Activated CD4-positive, alpha-beta T cell treated with anti-CD3 and anti-CD28 coated beads for 36 hours (primary cell): ENCODE measurements at regions of chr6 and their contacts with region 1.

Region 1: DNA sequence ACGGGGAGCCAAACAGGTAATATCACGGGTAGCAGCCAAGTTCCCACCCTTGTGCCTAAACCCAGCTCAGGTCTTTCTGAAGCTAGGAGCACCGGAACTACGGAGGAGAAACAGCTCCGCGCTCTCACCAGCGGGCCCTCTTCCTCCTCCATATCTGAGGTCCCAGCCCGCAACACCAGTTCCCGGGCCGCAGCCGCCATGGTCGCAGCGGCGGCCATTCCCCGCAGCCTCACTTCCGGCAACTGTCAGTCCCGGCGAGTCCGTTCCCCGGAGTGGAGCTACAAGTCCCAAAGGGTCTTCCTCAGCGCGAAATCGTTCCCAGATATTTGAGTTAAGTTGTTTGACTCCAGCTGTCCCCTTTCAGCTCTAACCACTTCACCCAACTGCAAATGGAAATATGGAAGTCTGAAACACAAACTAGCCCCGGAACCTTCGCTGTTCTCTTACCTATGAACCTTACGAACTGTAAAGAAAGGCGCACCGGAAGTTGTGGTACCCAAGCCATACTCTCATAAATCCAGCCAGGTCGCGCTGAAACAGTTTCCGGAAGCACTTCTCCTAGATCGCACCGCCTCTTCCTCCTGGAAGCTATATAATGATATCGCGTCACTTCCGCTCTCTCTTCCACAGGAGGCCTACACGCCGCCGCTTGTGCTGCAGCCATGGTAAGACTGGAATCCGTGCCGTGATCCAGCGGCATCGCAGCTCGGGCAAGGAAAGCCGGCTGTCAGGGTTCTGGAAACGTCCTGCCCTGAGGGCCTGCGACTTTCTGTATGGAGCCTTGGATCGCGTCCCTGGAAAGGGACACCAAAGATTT is at the starts of genes RPS18 and VPS52:
- DNase-seq: peak; percentile 94
- ATAC-seq: peak; percentile 92
- H3K4me3 Mint-ChIP-seq: peak within 1 kb of the TSS; percentile 91
- H3K27ac Mint-ChIP-seq: peak within 1 kb of the TSS; percentile 100
- H3K4me1 Mint-ChIP-seq: peaks cover 47% of the 10 kb centered on the region
- H3K27me3 Mint-ChIP-seq: no peaks in the 10 kb centered on the region
- total RNA-seq, gene RPS18: 2,706 to 4,631 TPM
- total RNA-seq, gene VPS52: 35.6 to 45.2 TPM

Region 2: DNA sequence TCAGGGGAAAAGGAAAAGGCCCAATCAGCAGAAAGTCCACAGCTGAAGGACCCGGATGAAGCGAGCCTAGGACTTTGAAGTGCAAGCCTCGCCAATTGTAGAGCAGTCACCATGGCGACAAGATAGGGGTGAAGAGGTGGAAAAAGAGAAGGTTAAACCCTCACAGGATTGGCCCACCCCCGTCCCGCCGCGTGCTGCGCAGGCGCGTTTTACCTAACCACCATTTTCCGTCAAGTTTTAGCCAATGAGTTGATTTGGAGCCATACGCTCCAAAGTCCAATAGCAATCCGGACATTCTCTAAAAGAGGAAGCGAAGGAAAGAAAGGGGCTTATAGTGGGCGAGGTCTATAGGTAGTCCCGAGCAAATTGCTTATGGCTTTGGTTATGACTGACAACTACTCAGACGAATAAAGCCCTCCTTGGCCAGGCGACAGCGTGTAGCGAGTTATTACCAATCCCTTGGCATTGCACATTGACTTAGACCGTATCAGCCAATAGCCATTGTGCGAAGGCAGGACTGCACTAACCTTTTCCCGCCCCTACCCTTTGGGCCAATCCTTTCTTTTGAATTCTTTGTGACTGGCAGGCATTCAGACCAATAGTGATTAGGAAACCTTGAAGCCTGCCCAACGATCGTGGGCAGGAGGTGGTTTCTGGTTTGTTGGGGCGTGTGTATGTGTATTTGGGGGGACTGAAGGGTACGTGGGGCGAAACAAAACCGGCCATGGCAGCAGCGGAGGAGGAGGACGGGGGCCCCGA is 1093.7 kb before region 1 on chr6 and contains the start of gene RNF5:
- CTCF ChIA-PET with region 1: no interaction called
- POLR2A ChIA-PET with region 1: no interaction called
- intact Hi-C with region 1: loop called in 1 of 2 experiments (anchors 1 kb)
- DNase-seq: peak; percentile 96
- ATAC-seq: peak; percentile 89
- H3K4me3 Mint-ChIP-seq: peak within 1 kb of the TSS; percentile 92
- H3K27ac Mint-ChIP-seq: peak within 1 kb of the TSS; percentile 98
- H3K4me1 Mint-ChIP-seq: peaks cover 70% of the 10 kb centered on the region
- H3K27me3 Mint-ChIP-seq: no peaks in the 10 kb centered on the region
- total RNA-seq, gene RNF5: 51.7 to 65.6 TPM

Region 3: DNA sequence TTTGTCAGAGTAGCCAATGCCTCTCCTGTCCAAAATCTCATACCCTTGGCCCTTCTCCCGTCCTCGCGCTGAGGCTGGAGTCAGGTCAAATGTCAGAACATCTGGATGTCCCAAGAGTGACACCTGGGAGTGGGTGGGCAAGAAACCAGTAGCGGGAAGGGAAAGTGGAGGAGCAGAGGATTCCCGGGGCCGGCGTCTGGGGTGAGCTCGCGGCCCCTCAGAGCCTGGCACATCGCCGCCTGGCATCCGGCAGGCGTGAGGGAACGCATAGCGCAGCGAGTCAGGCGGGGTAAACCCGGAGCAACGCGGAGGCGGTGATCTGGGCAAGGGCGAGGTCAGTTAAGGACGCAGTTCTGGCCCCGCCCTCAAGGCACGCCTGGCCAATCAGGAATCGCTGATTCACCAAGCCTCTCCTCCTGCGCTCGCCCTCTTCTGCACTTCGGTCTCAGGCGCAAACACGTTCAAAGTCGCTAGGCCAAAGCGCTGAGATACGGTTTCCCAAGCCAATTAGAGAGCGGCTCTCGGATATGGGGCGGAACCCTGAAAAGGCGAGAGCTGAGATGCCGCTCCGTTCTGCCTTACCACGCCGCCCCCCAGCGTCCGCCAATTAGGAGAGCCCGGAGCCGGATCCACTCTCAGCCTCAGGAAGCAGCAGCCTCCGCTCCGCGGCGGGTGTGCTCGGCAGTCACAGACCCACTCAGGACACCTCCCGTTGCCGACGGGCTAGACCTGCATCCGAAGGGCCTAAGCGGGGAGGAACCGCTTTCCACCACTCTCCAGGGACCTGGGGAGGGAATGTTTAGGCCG is 22.5 kb before region 1 on chr6:
- CTCF ChIA-PET with region 1: interaction called, 14 read pairs
- POLR2A ChIA-PET with region 1: interaction called, 8 read pairs
- intact Hi-C with region 1: loop called (anchors 1 kb)
- DNase-seq: peak; percentile 99
- ATAC-seq: peak; percentile 93
- H3K4me3 Mint-ChIP-seq: peak overlapping the region; percentile 91
- H3K27ac Mint-ChIP-seq: peak overlapping the region; percentile 96
- H3K4me1 Mint-ChIP-seq: peaks cover 41% of the 10 kb centered on the region
- H3K27me3 Mint-ChIP-seq: peaks cover 3% of the 10 kb centered on the region

Region 4: GRCh38 chr6:33317669-33318425 is 46.2 kb after region 1 on chr6 and contains the start of gene ZBTB22:
- CTCF ChIA-PET with region 1: interaction called, 8 read pairs
- POLR2A ChIA-PET with region 1: interaction called, 10 read pairs
- intact Hi-C with region 1: loop called (anchors 1 kb)
- DNase-seq: peak; percentile 98
- ATAC-seq: peak; percentile 69
- H3K4me3 Mint-ChIP-seq: peak within 1 kb of the TSS; percentile 80
- H3K27ac Mint-ChIP-seq: peak within 1 kb of the TSS; percentile 93
- H3K4me1 Mint-ChIP-seq: peaks cover 70% of the 10 kb centered on the region
- H3K27me3 Mint-ChIP-seq: no peaks in the 10 kb centered on the region
- total RNA-seq, gene ZBTB22: 9.0 to 9.9 TPM

Region 5: DNA sequence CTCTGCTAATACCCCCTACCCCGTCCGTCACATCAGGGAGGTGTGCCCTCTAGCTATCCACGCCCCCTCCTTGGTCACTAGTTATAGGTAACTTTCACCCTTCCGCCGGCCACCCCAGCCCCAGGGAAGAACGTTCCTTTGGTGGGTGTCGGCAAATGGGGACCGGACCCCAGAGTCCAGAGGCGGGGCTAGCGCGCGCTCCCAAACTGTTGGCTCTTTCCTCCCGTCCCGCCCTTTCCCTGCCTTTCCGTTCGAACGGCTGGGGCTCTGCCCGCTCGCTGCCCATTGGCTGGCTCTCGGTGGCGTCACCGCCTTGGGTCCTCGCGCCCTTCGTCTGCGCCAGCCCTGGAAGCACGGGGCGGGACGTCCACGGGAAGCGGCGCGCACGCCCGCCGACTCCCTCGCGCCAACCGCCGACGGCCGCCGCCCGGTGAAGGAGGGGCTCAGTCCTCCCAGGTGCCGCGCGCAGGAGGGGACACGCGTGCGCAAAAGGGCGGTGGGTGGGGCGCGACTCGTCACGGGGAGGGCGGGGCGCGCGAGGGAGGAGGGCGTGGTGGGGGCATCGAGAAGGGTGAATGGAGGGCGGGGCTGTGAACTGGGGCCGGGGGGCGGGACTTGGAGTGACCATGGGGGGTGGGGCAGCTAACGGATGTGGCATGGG is 138.5 kb after region 1 on chr6:
- CTCF ChIA-PET with region 1: no interaction called
- POLR2A ChIA-PET with region 1: no interaction called
- intact Hi-C with region 1: loop called in 1 of 2 experiments (anchors 1 kb)
- DNase-seq: peak; percentile 98
- ATAC-seq: peak; percentile 88
- H3K4me3 Mint-ChIP-seq: peak overlapping the region; percentile 80
- H3K27ac Mint-ChIP-seq: peak overlapping the region; percentile 96
- H3K4me1 Mint-ChIP-seq: peaks cover 31% of the 10 kb centered on the region
- H3K27me3 Mint-ChIP-seq: no peaks in the 10 kb centered on the region